ENCODE measurements at regions of chr14 and their contacts with region 1.

Region 1: GRCh38 chr14:64340560-64341196 is 46.5 kb upstream of the ESR2 start:
- DNase-seq: peak; percentile 31
- H3K4me3 ChIP-seq: no peak overlapping the region
- H3K27ac ChIP-seq: no peak overlapping the region
- H3K4me1 ChIP-seq: no peaks in the 10 kb centered on the region; the same call in 1 of the 2 replicates
- H3K27me3 ChIP-seq: no peaks in the 10 kb centered on the region

Region 2: GRCh38 chr14:64117671-64118402 is 222.8 kb before region 1 on chr14:
- in situ Hi-C with region 1: no loop called
- DNase-seq: peak; percentile 51
- H3K4me3 ChIP-seq: no peak overlapping the region
- H3K27ac ChIP-seq: no peak overlapping the region
- H3K4me1 ChIP-seq: no peaks in the 10 kb centered on the region; the same call in 1 of the 2 replicates
- H3K27me3 ChIP-seq: no peaks in the 10 kb centered on the region

Region 3: DNA sequence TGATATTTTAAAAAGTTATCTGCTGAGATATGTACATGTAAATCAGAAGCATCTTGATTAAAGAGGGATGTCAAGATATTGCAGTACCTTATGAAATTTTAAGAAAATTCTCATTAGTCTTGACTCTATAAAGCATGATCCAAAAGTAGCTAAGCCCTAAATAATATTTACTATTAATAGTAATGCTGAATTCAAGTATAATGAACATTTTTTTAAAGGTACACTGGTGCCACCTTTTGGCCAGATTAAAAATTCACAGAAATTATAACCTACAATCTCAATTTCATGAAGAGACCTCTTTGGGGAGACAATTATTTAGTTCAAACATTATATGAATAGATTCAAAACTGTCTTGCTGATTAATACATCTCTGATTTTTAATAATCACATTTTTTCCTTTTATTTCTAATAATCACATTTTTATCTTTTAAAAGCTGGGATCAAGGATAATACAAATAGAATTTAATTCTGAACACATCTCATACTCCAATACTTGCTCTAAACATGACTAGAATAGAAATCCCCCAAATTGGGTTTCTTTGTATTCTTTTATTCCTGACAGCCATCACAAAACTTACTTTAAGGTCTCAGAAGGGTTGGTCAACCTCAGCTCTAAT is 138.1 kb after region 1 on chr14:
- in situ Hi-C with region 1: loop called (anchors 10 kb)
- DNase-seq: peak; percentile 29
- H3K4me3 ChIP-seq: no peak overlapping the region
- H3K27ac ChIP-seq: no peak overlapping the region
- H3K4me1 ChIP-seq: no peaks in the 10 kb centered on the region
- H3K27me3 ChIP-seq: no peaks in the 10 kb centered on the region